ENCODE measurements at regions of chr4 and their contacts with region 1.

Region 1: DNA sequence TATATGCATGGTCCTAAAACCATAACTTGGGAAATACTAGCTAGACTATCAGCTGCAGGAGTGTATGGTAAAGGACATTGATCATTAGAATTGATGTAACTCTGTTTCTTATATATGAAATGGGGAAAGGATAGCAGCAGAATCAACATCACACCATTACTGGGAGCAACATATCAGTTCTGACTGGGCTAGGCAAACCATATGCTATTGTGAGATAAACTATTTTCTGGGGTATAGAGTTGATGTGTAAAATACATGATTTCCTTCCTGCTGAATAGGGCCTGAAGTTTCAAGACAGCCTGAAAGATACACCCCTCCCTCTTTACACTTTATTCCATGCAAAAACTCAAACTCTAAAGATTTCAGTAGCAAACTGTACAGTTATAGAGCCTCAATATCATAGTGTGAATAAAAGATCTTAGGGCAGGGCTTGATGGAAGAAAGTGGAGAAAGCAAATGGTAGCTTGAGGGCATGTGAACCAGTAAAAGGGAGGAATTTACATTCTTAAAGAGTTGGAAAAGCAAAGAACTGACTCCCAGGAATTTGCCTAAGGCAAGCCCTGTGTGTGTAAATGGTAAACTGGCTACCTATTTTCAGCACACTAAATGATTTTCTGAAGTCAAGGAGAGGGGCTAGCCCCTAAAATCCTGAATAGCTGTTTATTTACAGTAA is 404.1 kb downstream of the MAPK10 start:
- DNase-seq: no peak
- H3K4me3 ChIP-seq: no peak overlapping the region
- H3K27ac ChIP-seq: no peak overlapping the region
- H3K4me1 ChIP-seq: peaks cover 0 to 17% (median 5%) of the 10 kb centered on the region in 4 experiments; a peak in 5 of 7 replicates
- H3K27me3 ChIP-seq: no peaks in the 10 kb centered on the region
- CTCF ChIP-seq: no peak
- EP300 ChIP-seq: no peak
- POLR2A ChIP-seq: no peak
- RAD21 ChIP-seq: no peak

Region 2: DNA sequence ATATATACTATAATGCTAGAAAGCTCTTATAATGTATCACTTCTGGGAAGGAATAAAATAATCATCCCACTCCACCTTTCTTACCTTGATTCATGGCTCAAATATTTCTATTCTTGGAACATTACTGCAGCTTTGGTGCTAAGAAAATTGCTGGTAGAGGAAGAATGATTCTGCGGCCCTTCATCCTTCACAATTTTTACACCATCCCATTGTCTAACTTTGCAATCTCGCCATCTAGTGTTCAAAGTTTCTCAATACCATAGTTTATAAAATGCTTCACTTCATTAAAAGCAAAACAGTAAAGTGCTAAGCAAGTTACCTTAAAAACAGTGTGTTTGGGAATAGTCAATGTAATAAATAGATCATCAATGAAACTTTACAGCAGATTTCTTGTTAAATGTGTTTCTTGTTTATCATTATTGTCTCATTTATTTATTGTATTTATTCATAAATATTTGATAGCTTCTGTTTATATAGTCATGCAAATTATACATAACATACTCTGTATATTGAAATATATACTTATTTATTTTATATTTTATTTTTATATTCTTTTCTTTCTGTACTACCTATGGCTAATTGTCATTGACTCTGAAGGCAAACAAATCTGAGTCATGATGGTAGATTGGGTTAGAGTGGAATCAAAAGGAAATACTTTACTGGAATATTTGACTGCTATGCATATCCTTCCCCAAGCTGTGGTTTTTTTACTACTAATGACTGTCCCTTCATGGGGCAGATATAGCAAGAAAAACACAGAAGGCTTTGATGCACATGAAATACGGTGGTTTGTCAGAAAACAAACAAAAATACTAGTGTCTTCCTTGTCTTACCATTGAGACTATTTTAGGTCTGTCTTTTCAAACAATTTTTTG is 13.4 kb after region 1 on chr4:
- CTCF ChIA-PET with region 1: interaction called, 15 read pairs
- POLR2A ChIA-PET with region 1: interaction called, 5 read pairs
- DNase-seq: no peak
- H3K4me3 ChIP-seq: no peak overlapping the region
- H3K27ac ChIP-seq: no peak overlapping the region
- H3K4me1 ChIP-seq: no peaks in the 10 kb centered on the region
- H3K27me3 ChIP-seq: no peaks in the 10 kb centered on the region
- CTCF ChIP-seq: peak in 2 of 3 experiments; percentile 46 to 54; a peak in 2 of 4 replicates
- EP300 ChIP-seq: no peak
- POLR2A ChIP-seq: no peak
- RAD21 ChIP-seq: peak; percentile 75 to 79